ENCODE measurements at regions of chr10 and their contacts with region 1.

Region 1: DNA sequence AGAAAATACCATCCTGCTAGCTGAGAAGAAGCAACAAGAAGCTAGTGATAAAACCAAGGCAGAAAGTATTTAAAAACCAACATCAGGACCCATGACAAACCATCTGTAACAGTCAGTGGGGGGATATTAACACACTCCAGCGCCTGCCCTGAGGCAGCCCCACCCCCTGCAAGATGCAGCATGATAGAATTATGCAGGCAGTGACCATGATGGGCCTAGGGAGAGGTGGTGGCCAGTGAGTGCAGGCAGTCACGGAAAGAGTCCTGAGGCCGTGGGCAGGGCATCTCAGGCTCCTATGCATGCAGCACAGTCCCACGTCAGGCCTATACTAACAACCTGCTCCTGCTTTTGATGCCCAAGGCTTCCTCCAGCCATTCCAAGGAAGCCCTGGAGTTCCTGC is 686.9 kb downstream of the GRID1 start:
- DNase-seq: no peak

Region 2: DNA sequence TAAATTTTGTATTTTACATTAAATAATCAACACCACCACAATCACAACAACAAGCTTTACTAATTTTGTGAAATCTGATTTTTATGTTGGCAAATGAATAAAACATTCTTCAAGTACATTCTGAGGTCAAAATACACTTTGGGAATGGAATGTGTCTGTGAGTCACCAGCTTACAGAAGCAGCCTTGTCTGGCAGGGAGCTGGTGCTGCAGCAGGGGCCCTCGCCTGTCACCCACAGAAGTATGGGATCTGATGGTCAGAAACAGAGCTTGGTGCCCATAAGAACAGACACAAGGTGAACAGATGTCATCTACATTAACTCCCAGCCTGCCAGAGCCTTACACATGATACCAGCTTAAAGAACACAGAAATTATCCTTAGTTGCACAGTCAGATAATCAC is 854.4 kb before region 1 on chr10:
- intact Hi-C with region 1: no loop called
- DNase-seq: no peak

Region 3: GRCh38 chr10:85657478-85658113 is 22.1 kb before region 1 on chr10:
- intact Hi-C with region 1: loop called in 1 of 2 experiments (anchors 1 kb)
- DNase-seq: no peak

Measured in posterior vena cava (tissue), 2 donors.